Heart left ventricle (tissue), 16 donors: ENCODE measurements at regions of chr16 and their contacts with region 1.

Region 1: GRCh38 chr16:83926726-83927397 is 26.2 kb upstream of the OSGIN1 start:
- DNase-seq: peak; percentile 64 to 84 (median 72)
- ATAC-seq: peak; percentile 62 to 67 (median 64)
- H3K4me3 ChIP-seq: no peak overlapping the region
- H3K27ac ChIP-seq: no peak overlapping the region
- H3K4me1 ChIP-seq: peaks cover 0 to 25% (median 11%) of the 10 kb centered on the region in 12 donors
- H3K27me3 ChIP-seq: no peaks in the 10 kb centered on the region
- CTCF ChIP-seq: peak; percentile 88 to 98 (median 94)
- POLR2A ChIP-seq: no peak

Region 2: GRCh38 chr16:83887081-83887480 is 39.8 kb before region 1 on chr16:
- intact Hi-C with region 1: loop called in 1 of 10 experiments (anchors 1 kb)
- DNase-seq: no peak
- ATAC-seq: no peak
- H3K4me3 ChIP-seq: no peak overlapping the region
- H3K27ac ChIP-seq: no peak overlapping the region
- H3K4me1 ChIP-seq: peaks cover 0 to 5% (median 2%) of the 10 kb centered on the region in 12 donors
- H3K27me3 ChIP-seq: peaks cover 0 to 2% (median 0%) of the 10 kb centered on the region in 9 donors
- CTCF ChIP-seq: no peak
- POLR2A ChIP-seq: no peak

Region 3: GRCh38 chr16:84062734-84063640 is 136.1 kb after region 1 on chr16:
- intact Hi-C with region 1: no loop called
- DNase-seq: peak; percentile 73 to 85 (median 80)
- ATAC-seq: peak; percentile 60 to 85 (median 85)
- H3K4me3 ChIP-seq: no peak overlapping the region
- H3K27ac ChIP-seq: peak overlapping the region in 5 of 12 donors; percentile 11 to 46 (median 31)
- H3K4me1 ChIP-seq: peaks cover 0 to 24% (median 12%) of the 10 kb centered on the region in 12 donors
- H3K27me3 ChIP-seq: no peaks in the 10 kb centered on the region
- CTCF ChIP-seq: peak; percentile 74 to 93 (median 88)
- POLR2A ChIP-seq: no peak